Right ventricle myocardium superior (tissue), 1 donor: ENCODE measurements at regions of chr11 and their contacts with region 1.

Region 1: GRCh38 chr11:4636962-4637661 is at the start of gene OR51D1:
- DNase-seq: peak; percentile 81
- ATAC-seq: peak; percentile 98
- total RNA-seq, gene OR51D1: not detected

Region 2: DNA sequence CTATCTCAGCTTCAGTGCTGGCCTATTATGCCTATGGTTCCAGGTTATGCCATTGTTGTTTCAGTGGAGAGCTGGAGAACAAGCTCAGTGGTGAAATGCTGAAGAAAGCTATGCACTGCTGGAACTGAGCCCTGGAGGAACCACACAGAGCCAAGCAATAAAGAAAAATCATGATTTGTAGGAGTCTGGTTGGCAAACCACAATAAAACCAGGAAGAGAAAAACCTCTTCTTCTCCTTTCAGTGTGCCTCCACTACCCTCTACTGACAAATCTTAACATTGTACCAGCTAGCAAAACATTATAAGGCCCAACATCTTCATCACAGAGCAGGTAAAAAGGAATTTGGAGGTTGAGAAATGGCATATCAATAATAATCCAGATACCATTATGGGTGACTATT is 189.3 kb after region 1 on chr11:
- intact Hi-C with region 1: loop called (anchors 2 kb)
- DNase-seq: no peak
- ATAC-seq: peak; percentile 62

Region 3: GRCh38 chr11:5004424-5005274 is 367.5 kb after region 1 on chr11:
- intact Hi-C with region 1: loop called (anchors 5 kb)
- DNase-seq: peak; percentile 48
- ATAC-seq: peak; percentile 58